ENCODE measurements at regions of chr1 and their contacts with region 1.

Region 1: DNA sequence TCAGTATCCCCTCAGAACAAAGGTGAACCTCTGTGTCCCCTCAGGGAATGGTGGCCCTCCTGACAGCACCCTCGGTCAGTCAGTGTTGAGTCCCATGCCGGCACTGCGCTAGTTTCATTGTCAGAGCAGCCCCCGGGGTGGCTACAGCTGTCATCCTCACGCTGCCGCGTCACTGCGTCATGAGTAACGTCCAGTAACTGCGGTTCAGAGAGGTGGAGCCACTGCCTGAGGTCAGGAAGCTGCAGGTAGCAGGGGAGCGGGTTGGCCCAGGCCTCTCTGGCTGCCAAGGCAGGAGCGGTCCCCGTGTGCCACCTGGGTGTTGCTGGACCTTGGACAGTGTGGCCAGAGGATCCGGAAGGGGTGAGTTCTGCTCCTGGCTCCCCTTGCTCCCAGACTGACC is 20.2 kb upstream of the WNT4 start:
- DNase-seq: no peak
- H3K4me3 ChIP-seq: no peak overlapping the region
- H3K27ac ChIP-seq: no peak overlapping the region
- H3K4me1 ChIP-seq: no peaks in the 10 kb centered on the region
- H3K27me3 ChIP-seq: peaks cover 9% of the 10 kb centered on the region
- CTCF ChIP-seq: no peak

Region 2: DNA sequence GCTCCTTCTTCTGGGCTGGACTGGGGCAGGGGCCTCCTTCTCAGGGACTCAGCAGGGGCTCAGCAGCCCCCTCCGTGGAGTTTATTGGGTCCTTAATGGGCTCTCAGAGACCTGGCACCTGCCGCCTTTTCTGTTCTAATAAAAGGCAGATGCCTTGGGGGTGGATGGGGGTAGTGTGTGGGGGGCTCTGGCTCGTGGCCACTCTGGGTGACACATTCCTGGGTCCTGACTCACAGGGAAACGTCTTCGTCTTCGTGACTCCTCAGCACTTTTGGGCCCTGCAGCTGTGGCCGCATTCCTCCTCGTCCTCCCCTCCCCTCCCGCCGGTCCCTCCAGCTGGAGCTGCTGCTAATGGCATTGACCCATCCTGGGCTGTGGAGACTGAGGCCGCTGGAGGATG is 87.6 kb after region 1 on chr1:
- dilution Hi-C with region 1: no loop called
- DNase-seq: no peak
- H3K4me3 ChIP-seq: no peak overlapping the region
- H3K27ac ChIP-seq: no peak overlapping the region
- H3K4me1 ChIP-seq: peaks cover 4% of the 10 kb centered on the region
- H3K27me3 ChIP-seq: peaks cover 59% of the 10 kb centered on the region
- CTCF ChIP-seq: no peak

Region 3: DNA sequence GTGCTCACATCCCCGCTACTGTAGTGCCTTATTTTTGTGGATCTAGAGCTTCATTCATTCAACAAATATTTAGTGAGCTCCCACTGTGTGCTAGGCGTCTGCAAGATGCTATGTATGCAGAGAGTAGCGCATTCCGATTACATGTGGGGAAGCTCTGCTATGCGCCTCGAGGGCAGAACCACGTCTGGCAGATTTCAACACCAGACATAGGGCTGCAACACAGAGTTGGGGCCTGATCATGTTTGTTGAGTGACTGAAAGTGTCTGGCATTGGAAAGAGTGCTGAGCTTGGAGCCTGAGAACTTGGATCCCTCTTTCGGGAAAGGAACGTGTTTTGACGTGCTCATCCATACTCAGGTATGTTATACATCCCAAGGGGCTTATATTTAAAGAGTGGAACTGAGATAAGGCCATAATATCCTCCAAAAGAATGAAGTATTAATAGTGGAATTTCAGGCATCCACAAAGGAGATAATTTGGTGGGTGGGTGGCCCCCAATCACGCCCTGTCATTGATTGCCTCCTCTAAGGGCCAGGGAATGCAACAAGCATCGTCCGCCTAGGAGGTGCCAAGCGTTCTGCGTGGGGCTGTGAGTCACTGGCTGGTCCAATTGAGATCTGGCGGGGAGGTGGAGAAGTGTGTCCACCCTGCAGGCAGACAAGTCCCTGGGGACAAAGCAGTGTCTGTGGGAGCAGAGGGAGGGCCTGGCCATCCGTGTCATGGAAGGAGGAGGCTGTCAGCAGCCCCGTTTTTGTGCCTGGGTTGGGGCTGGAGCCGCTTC is 225.7 kb after region 1 on chr1:
- dilution Hi-C with region 1: loop called (anchors 25 kb)
- DNase-seq: peak; percentile 23
- H3K4me3 ChIP-seq: no peak overlapping the region
- H3K27ac ChIP-seq: peak overlapping the region; percentile 27
- H3K4me1 ChIP-seq: peaks cover 16% of the 10 kb centered on the region
- H3K27me3 ChIP-seq: peaks cover 5% of the 10 kb centered on the region
- CTCF ChIP-seq: no peak